Gastrocnemius medialis (tissue), 4 donors: ENCODE measurements at regions of chr19 and their contacts with region 1.

Region 1: GRCh38 chr19:57389730-57390598 is at the start of gene ZNF548:
- DNase-seq: peak; percentile 97 to 98
- ATAC-seq: peak; percentile 100
- H3K4me3 ChIP-seq: peak within 1 kb of the TSS; percentile 75 to 85 (median 81)
- H3K27ac ChIP-seq: peak within 1 kb of the TSS; percentile 87 to 98 (median 92)
- H3K4me1 ChIP-seq: peaks cover 22 to 26% of the 10 kb centered on the region in 2 donors
- H3K27me3 ChIP-seq: no peaks in the 10 kb centered on the region
- CTCF ChIP-seq: peak in 4 of 5 experiments; percentile 24 to 41 (median 33)
- POLR2A ChIP-seq: peak; percentile 70 to 78
- total RNA-seq, gene ZNF548: 6.1 to 10.4 (median 8.3) TPM

Region 2: GRCh38 chr19:57302020-57302465 is 87.9 kb before region 1 on chr19:
- in situ Hi-C with region 1: no loop called
- intact Hi-C with region 1: loop called (anchors 5 kb)
- DNase-seq: peak; percentile 81 to 91
- ATAC-seq: peak; percentile 99 to 100
- H3K4me3 ChIP-seq: no peak overlapping the region
- H3K27ac ChIP-seq: peak overlapping the region; percentile 77 to 83 (median 80)
- H3K4me1 ChIP-seq: peaks cover 23 to 30% of the 10 kb centered on the region in 2 donors
- H3K27me3 ChIP-seq: no peaks in the 10 kb centered on the region
- CTCF ChIP-seq: no peak
- POLR2A ChIP-seq: no peak

Region 3: GRCh38 chr19:57320180-57321084 is 69.5 kb before region 1 on chr19 and contains the start of gene ZNF543:
- in situ Hi-C with region 1: no loop called
- intact Hi-C with region 1: loop called (anchors 1 kb)
- DNase-seq: peak; percentile 94 to 95
- ATAC-seq: peak; percentile 95 to 96
- H3K4me3 ChIP-seq: peak within 1 kb of the TSS; percentile 65 to 99 (median 91)
- H3K27ac ChIP-seq: peak within 1 kb of the TSS; percentile 87 to 98 (median 91)
- H3K4me1 ChIP-seq: peaks cover 18 to 19% of the 10 kb centered on the region in 2 donors
- H3K27me3 ChIP-seq: no peaks in the 10 kb centered on the region
- CTCF ChIP-seq: no peak
- POLR2A ChIP-seq: peak; percentile 78 to 87
- total RNA-seq, gene ZNF543: 5.8 to 11.5 (median 8.3) TPM

Region 4: DNA sequence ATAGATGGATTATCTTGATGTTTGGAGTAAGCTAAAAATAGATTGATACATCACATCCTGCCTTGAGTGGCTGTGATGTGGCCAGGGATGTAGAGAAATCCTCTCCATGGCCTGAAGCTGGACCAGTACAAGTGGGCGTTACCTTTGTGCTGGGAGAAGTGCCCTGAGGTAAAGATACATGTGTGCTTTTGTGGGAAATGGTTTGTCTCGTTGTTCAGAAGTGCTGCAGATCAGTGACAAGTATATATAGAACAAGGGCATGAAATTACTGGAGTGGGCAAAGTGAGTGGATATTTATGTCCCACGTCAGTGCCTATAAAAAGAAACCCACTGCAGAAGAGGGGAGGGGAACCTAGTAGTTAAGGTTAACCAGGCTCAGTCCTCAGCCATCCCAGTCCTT is 51.1 kb before region 1 on chr19:
- in situ Hi-C with region 1: no loop called
- intact Hi-C with region 1: no loop called
- DNase-seq: peak in 1 of 2 donors; percentile 37
- ATAC-seq: peak; percentile 87 to 97
- H3K4me3 ChIP-seq: peak overlapping the region in 1 of 4 donors; percentile 17
- H3K27ac ChIP-seq: peak overlapping the region; percentile 72 to 79 (median 76)
- H3K4me1 ChIP-seq: peaks cover 8 to 23% of the 10 kb centered on the region in 2 donors
- H3K27me3 ChIP-seq: no peaks in the 10 kb centered on the region
- CTCF ChIP-seq: no peak
- POLR2A ChIP-seq: no peak

Region 5: DNA sequence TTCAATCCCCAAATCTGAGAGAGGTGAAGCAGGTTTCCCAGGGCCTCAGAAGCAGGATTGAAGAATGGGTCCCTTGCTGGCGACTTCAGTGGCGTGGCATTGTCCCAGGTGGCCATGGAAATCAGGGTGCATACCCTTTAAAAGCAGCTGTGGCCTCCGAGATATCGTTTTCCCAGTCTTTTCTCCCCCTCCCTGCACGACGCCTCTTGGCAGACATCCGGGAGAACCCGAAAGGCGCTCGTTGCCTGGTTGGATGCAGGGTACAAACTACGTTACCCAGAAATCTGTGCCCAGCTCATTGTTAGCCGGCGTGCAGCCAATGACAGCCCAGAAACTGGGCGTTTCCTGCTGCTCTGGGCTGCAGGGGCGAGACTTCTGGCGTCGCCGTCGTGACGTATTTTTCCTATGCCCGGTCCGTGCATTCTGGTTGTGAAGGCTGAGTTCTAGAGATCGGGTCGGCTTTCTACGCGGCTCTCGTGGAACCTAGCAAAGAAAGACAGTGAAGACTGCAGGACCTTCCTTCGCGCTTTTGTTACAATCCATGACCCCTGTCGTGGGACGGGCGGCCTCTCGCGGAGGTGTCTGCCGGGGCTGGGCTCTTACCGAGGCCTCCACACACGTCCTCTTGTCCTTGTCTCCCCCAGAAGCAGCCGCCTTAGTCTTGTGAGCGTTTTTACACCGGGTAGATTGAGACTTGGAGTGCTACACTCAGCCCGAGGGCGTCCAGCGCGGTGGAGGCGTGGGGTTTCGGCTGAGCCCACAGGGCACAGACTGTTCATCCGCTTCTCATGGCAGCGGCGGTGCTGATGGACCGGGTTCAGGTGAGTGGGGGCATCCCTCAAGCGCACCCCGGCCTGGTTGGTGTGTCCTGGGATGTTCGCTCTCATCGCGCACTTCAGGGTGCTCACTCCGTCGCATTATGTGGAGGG is 38.8 kb before region 1 on chr19 and contains the start of gene ZNF304:
- in situ Hi-C with region 1: no loop called
- intact Hi-C with region 1: loop called (anchors 5 kb)
- DNase-seq: peak; percentile 90 to 93
- ATAC-seq: peak; percentile 97 to 98
- H3K4me3 ChIP-seq: peak within 1 kb of the TSS; percentile 77 to 99 (median 93)
- H3K27ac ChIP-seq: peak within 1 kb of the TSS; percentile 78 to 96 (median 92)
- H3K4me1 ChIP-seq: peaks cover 22 to 29% of the 10 kb centered on the region in 2 donors
- H3K27me3 ChIP-seq: no peaks in the 10 kb centered on the region
- CTCF ChIP-seq: no peak
- POLR2A ChIP-seq: peak; percentile 33 to 36
- total RNA-seq, gene ZNF304: 4.1 to 6.5 (median 4.8) TPM

Region 6: GRCh38 chr19:57410877-57411671 is 21.1 kb after region 1 on chr19 and contains the start of gene ZNF17:
- in situ Hi-C with region 1: no loop called
- intact Hi-C with region 1: loop called (anchors 1 kb)
- DNase-seq: peak; percentile 93 to 95
- ATAC-seq: peak; percentile 99 to 100
- H3K4me3 ChIP-seq: peak within 1 kb of the TSS; percentile 83 to 94 (median 92)
- H3K27ac ChIP-seq: peak within 1 kb of the TSS; percentile 78 to 88 (median 84)
- H3K4me1 ChIP-seq: peaks cover 15 to 21% of the 10 kb centered on the region in 2 donors
- H3K27me3 ChIP-seq: no peaks in the 10 kb centered on the region
- CTCF ChIP-seq: no peak
- POLR2A ChIP-seq: peak; percentile 20 to 47
- total RNA-seq, gene ZNF17: 3.3 to 6.4 (median 5.4) TPM

Region 7: DNA sequence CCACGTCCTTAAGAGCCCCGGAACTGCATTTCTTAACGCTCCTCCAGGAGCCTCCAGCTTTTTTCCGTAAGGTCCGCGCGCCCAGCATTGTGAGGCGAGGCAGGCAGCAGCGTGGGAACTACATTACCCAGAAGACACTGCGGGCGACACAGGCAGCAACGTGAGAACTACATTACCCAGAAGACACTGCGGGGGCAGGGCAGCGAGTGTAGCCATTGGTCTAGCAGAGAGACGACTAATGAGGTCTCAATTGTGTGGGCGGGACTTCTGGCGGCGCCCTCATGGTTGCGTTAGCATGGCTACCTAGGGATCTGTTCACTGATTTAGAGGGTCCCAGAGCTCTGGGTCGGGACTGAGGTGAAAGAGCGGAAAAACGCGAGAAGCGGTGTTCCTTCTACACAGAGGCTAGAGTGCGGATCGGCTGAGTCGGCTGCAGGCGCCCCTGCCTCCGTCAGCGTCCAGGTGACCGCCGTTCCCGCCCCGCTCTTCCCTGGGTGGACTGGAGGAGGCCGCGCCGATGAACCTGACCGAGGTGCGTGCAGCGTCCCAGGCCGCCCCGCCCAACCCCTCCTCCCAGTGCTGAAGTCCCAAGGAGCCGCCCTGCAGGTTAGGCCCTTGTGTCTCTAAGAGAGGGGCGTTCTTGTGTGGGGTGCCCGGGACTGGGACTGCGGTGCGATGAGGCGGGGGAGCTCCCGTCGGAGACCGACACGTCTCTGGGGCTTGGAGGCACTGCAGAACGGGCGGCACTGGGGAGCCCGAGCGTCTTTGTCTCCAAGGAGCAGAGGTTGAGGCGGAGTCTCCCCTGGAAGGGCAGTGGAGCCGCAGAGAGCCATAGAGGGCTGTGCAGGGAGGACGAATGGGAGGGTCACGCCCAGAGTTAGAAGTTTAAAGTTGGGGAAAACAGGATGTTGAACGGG is 45.4 kb after region 1 on chr19 and contains the start of gene ZNF749:
- in situ Hi-C with region 1: no loop called
- intact Hi-C with region 1: loop called (anchors 1 kb)
- DNase-seq: peak; percentile 97 to 99
- ATAC-seq: peak; percentile 100
- H3K4me3 ChIP-seq: peak within 1 kb of the TSS; percentile 87 to 94 (median 90)
- H3K27ac ChIP-seq: peak within 1 kb of the TSS; percentile 70 to 79 (median 75)
- H3K4me1 ChIP-seq: peaks cover 14 to 17% of the 10 kb centered on the region in 2 donors
- H3K27me3 ChIP-seq: no peaks in the 10 kb centered on the region
- CTCF ChIP-seq: no peak
- POLR2A ChIP-seq: no peak
- total RNA-seq, gene ZNF749: 3.1 to 11.4 (median 3.9) TPM